Adrenal gland (tissue), 19 donors: ENCODE measurements at regions of chr10 and their contacts with region 1.

Region 1: DNA sequence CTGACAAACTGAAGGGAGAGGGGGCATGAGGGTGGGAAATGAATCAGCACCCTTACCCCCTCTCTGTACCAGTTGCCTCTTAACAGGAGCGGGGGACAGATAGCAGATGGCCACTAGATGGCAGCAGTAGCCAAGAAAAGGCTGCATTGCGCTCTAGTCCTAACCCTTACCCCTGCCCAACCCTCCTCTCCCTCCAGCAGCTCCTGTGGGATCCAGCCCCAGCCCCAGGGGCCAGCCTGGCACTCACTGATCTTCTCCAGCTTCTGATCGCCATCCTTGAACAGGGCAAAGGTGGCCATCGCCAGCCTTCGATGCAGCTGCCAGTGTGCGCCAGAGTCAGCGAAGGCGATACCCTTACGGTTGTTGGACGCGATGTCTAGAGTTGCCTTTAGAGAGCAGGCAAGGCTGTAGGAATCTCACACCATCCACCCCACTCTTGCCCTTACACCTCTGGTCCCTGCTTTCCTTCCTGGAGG is 2.2 kb downstream of the CYP17A1 start:
- DNase-seq: peak; percentile 77 to 90 (median 81)
- H3K4me3 ChIP-seq: peak overlapping the region; percentile 12 to 69 (median 44)
- H3K27ac ChIP-seq: peak overlapping the region; percentile 59 to 92 (median 87)
- H3K4me1 ChIP-seq: peaks cover 0 to 10% of the 10 kb centered on the region in 2 donors
- H3K27me3 ChIP-seq: no peaks in the 10 kb centered on the region
- CTCF ChIP-seq: peak; percentile 45 to 92 (median 76)
- POLR2A ChIP-seq: peak; percentile 2 to 38

Region 2: GRCh38 chr10:102894466-102895213 is 59.6 kb after region 1 on chr10:
- intact Hi-C with region 1: loop called (anchors 5 to 10 kb)
- DNase-seq: no peak
- H3K4me3 ChIP-seq: no peak overlapping the region
- H3K27ac ChIP-seq: no peak overlapping the region
- H3K4me1 ChIP-seq: peaks cover 9 to 10% of the 10 kb centered on the region in 2 donors
- H3K27me3 ChIP-seq: no peaks in the 10 kb centered on the region
- CTCF ChIP-seq: no peak
- POLR2A ChIP-seq: no peak